ENCODE measurements at regions of chr9 and their contacts with region 1.

Region 1: GRCh38 chr9:124831642-124832364 is 21.5 kb upstream of the WDR38 start:
- H3K4me3 ChIP-seq: no peak overlapping the region
- H3K27ac ChIP-seq: no peak overlapping the region
- H3K4me1 ChIP-seq: peaks cover 10% of the 10 kb centered on the region
- CTCF ChIP-seq: no peak

Region 2: GRCh38 chr9:124880501-124880900 is 48.7 kb after region 1 on chr9:
- CTCF ChIA-PET with region 1: no interaction called
- POLR2A ChIA-PET with region 1: no interaction called
- H3K4me3 ChIP-seq: no peak overlapping the region
- H3K27ac ChIP-seq: no peak overlapping the region
- H3K4me1 ChIP-seq: no peaks in the 10 kb centered on the region
- CTCF ChIP-seq: no peak

Region 3: GRCh38 chr9:124939944-124940343 is 108.1 kb after region 1 on chr9:
- CTCF ChIA-PET with region 1: no interaction called
- POLR2A ChIA-PET with region 1: interaction called, 12 read pairs
- H3K4me3 ChIP-seq: peak overlapping the region; percentile 90
- H3K27ac ChIP-seq: no peak overlapping the region
- H3K4me1 ChIP-seq: 0 out of 2 replicates have a peak, but pooled peaks cover 2% of the 10 kb centered on the region
- CTCF ChIP-seq: no peak

Measured in HEK293 (cell line).